ENCODE measurements at regions of chr15 and their contacts with region 1.

Region 1: GRCh38 chr15:81265944-81266775 is 57.8 kb downstream of the STARD5 start:
- DNase-seq: peak; percentile 82 to 83 (median 82)
- ATAC-seq: peak; percentile 92 to 95 (median 93)
- H3K4me3 ChIP-seq: peak overlapping the region in 2 of 3 donors; percentile 17 to 37
- H3K27ac ChIP-seq: no peak overlapping the region
- H3K4me1 ChIP-seq: peaks cover 0 to 11% (median 3%) of the 10 kb centered on the region in 4 donors
- H3K27me3 ChIP-seq: no peaks in the 10 kb centered on the region
- CTCF ChIP-seq: peak; percentile 81 to 90 (median 89)
- POLR2A ChIP-seq: no peak

Region 2: GRCh38 chr15:80989518-80990478 is 276.4 kb before region 1 on chr15 and contains the start of gene MESD:
- intact Hi-C with region 1: loop called in 1 of 2 experiments (anchors 10 kb)
- DNase-seq: peak; percentile 99
- ATAC-seq: peak; percentile 96 to 99 (median 98)
- H3K4me3 ChIP-seq: peak within 1 kb of the TSS; percentile 78 to 88 (median 82)
- H3K27ac ChIP-seq: peak within 1 kb of the TSS; percentile 82 to 89 (median 83)
- H3K4me1 ChIP-seq: peaks cover 0 to 15% (median 6%) of the 10 kb centered on the region in 4 donors
- H3K27me3 ChIP-seq: no peaks in the 10 kb centered on the region
- CTCF ChIP-seq: no peak
- POLR2A ChIP-seq: peak; percentile 89
- total RNA-seq, gene MESD: 10.8 to 16.7 (median 14.6) TPM

Region 3: DNA sequence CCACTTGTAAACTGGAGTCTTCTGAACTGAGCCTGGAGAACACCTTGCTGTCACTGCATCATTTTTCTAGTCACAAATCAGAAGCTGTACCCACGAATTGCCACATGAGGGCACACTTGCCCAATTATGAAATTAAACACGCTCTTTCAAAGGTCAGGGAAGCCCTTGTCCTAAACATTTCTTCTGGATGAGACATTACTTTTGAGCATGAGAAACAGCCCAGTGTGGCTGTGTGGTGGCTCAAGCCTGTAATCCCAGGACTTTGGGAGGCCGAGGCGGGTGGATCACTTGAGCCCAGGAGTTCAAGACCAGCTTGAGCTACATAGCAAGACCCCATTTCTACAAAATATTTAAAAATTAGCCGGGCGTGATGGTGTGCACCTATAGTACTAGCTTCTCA is 159.6 kb before region 1 on chr15:
- intact Hi-C with region 1: loop called (anchors 5 to 10 kb)
- DNase-seq: peak in 1 of 3 donors; percentile 54
- ATAC-seq: peak; percentile 80 to 90 (median 87)
- H3K4me3 ChIP-seq: no peak overlapping the region
- H3K27ac ChIP-seq: no peak overlapping the region
- H3K4me1 ChIP-seq: peaks cover 0 to 12% (median 4%) of the 10 kb centered on the region in 4 donors
- H3K27me3 ChIP-seq: no peaks in the 10 kb centered on the region
- CTCF ChIP-seq: peak; percentile 71 to 78 (median 78)
- POLR2A ChIP-seq: no peak

Region 4: DNA sequence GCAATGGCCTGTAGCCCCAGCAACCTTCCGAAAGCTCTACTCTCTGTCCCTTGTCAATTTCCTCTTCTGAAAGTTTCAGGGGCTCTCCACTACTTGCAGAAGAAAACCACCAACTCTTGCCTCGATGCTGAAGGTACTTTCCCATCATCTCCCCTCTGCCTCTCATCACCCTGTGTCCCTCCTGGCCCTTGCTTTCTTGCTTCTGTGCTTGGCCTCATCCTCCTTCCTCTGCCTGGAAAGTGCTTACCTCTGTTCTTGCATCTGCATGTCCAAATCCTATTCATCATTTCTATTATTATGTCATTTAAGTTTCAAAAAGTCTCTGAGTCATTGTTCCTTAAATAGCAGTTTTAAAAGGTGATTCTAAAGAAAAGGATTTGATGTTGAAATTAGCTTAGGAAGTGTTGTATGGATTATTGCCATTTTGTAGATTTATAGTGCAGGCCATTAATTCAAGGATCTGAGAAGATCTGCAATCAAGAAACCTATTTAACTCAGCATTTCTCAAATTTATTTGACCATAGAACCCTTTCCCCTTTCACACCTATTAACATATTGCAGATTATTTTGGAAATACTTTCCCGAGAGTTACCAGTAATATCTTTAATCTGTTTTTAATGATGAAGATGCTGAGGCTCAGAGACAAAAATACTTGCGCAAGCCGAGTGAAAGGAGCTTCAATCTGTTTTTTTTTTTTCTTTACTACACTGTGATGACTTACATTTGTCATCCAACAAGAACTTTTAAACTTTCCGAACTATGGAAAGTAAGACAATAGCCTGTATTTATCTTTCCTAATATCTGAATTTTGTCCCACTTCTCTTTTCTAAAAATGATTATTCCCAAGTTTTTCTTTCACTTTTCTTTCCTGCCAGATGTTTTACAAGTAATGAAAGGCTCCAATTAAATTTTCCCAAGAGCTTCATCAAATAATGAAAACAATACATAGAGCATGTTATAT is 154.4 kb before region 1 on chr15:
- intact Hi-C with region 1: loop called (anchors 5 to 10 kb)
- DNase-seq: no peak
- ATAC-seq: no peak
- H3K4me3 ChIP-seq: no peak overlapping the region
- H3K27ac ChIP-seq: no peak overlapping the region
- H3K4me1 ChIP-seq: peaks cover 0 to 14% (median 5%) of the 10 kb centered on the region in 4 donors
- H3K27me3 ChIP-seq: no peaks in the 10 kb centered on the region
- CTCF ChIP-seq: no peak
- POLR2A ChIP-seq: no peak

Measured in right lobe of liver (tissue), 6 donors.